Naive thymus-derived CD4-positive, alpha-beta T cell (primary cell): ENCODE measurements at regions of chrX and their contacts with region 1.

Region 1: GRCh38 chrX:153609917-153610428 is 11.0 kb upstream of the CCNQ start:
- DNase-seq: peak; percentile 58 to 78 (median 71)
- ATAC-seq: peak; percentile 96
- H3K4me3 ChIP-seq: peak overlapping the region; percentile 44
- H3K4me3 Mint-ChIP-seq: peak overlapping the region; percentile 77 to 87 (median 85)
- H3K27ac ChIP-seq: peak overlapping the region; percentile 60
- H3K27ac Mint-ChIP-seq: peak overlapping the region in 8 of 9 donors; percentile 41 to 85 (median 76)
- H3K4me1 ChIP-seq: peaks cover 0 to 5% of the 10 kb centered on the region in 2 donors
- H3K4me1 Mint-ChIP-seq: peaks cover under 1 to 13% (median 7%) of the 10 kb centered on the region in 7 donors
- H3K27me3 ChIP-seq: no peaks in the 10 kb centered on the region
- H3K27me3 Mint-ChIP-seq: peaks cover 0 to 16% (median 0%) of the 10 kb centered on the region in 5 donors

Region 2: GRCh38 chrX:153554519-153555167 is 55.3 kb before region 1 on chrX:
- CTCF ChIA-PET with region 1: interaction called, 3 read pairs
- POLR2A ChIA-PET with region 1: interaction called, 4 read pairs
- intact Hi-C with region 1: loop called in 1 of 2 experiments (anchors 2 kb)
- DNase-seq: peak; percentile 26 to 71 (median 57)
- ATAC-seq: peak; percentile 78
- H3K4me3 ChIP-seq: no peak overlapping the region
- H3K4me3 Mint-ChIP-seq: no peak overlapping the region
- H3K27ac ChIP-seq: no peak overlapping the region
- H3K27ac Mint-ChIP-seq: no peak overlapping the region
- H3K4me1 ChIP-seq: no peaks in the 10 kb centered on the region
- H3K4me1 Mint-ChIP-seq: peaks cover 0 to 3% (median 0%) of the 10 kb centered on the region in 7 donors
- H3K27me3 ChIP-seq: no peaks in the 10 kb centered on the region
- H3K27me3 Mint-ChIP-seq: no peaks in the 10 kb centered on the region

Region 3: GRCh38 chrX:153568451-153569011 is 41.4 kb before region 1 on chrX:
- CTCF ChIA-PET with region 1: no interaction called
- POLR2A ChIA-PET with region 1: no interaction called
- intact Hi-C with region 1: no loop called
- DNase-seq: no peak
- ATAC-seq: no peak
- H3K4me3 ChIP-seq: no peak overlapping the region
- H3K4me3 Mint-ChIP-seq: no peak overlapping the region
- H3K27ac ChIP-seq: no peak overlapping the region
- H3K27ac Mint-ChIP-seq: no peak overlapping the region
- H3K4me1 ChIP-seq: no peaks in the 10 kb centered on the region
- H3K4me1 Mint-ChIP-seq: peaks cover 0 to 10% (median 3%) of the 10 kb centered on the region in 7 donors
- H3K27me3 ChIP-seq: no peaks in the 10 kb centered on the region
- H3K27me3 Mint-ChIP-seq: peaks cover 0 to 2% (median 0%) of the 10 kb centered on the region in 5 donors

Region 4: DNA sequence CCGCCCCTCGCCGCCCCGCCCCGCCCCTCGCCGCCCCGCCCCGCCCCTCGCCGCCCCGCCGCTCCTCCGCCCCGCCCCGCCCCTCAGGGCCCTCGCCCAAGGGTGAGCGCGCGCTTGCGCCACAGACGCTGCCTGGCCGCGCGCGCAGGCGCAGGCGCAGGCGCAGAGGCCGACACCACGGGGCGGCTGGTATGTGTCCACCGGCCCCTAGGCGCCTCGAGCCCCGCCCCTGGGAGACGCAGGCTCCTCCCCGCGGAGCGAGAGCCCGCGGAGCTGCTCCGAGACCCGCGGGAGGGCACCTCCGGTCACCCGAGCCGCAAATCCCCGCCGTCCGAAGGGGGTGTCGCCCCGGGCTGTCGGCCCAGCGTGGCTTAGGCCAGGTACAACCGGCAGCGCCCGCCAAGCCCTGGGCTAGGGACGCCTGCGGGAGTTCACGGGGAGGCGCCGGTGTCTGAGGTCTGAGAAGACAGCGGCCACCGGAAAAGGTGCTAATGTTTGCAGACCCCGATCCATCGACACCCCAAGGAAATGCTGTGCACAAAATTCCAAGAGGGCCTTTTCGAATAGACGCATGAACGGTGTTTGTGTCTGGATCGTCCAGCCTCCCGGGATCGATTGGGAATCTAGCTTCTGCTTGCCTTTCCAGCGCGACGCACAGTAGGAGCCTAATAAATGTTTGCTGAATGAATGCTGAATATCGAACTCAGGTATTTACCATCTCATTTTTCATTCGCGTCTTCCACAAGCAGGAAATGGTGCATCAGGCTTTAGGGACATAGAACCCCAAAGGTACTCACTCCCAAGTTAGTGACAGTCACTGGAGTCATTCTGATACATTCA is 10.6 kb before region 1 on chrX:
- CTCF ChIA-PET with region 1: interaction called, 15 read pairs
- POLR2A ChIA-PET with region 1: interaction called, 10 read pairs
- intact Hi-C with region 1: loop called (anchors 1 kb)
- DNase-seq: peak; percentile 77 to 91 (median 82)
- ATAC-seq: peak; percentile 94
- H3K4me3 ChIP-seq: peak overlapping the region; percentile 69
- H3K4me3 Mint-ChIP-seq: peak overlapping the region; percentile 79 to 93 (median 90)
- H3K27ac ChIP-seq: peak overlapping the region; percentile 74
- H3K27ac Mint-ChIP-seq: peak overlapping the region in 7 of 9 donors; percentile 48 to 83 (median 64)
- H3K4me1 ChIP-seq: peaks cover 19 to 21% of the 10 kb centered on the region in 2 donors
- H3K4me1 Mint-ChIP-seq: peaks cover 23 to 60% (median 46%) of the 10 kb centered on the region in 7 donors
- H3K27me3 ChIP-seq: no peaks in the 10 kb centered on the region
- H3K27me3 Mint-ChIP-seq: no peaks in the 10 kb centered on the region

Region 5: GRCh38 chrX:153662266-153662665 is 52.3 kb after region 1 on chrX:
- CTCF ChIA-PET with region 1: interaction called, 6 read pairs
- POLR2A ChIA-PET with region 1: interaction called, 3 read pairs
- intact Hi-C with region 1: loop called in 1 of 2 experiments (anchors 1 kb)
- DNase-seq: peak in 8 of 9 donors; percentile 26 to 58 (median 52)
- ATAC-seq: no peak
- H3K4me3 ChIP-seq: no peak overlapping the region
- H3K4me3 Mint-ChIP-seq: peak overlapping the region in 9 of 10 donors; percentile 42 to 73 (median 55)
- H3K27ac ChIP-seq: no peak overlapping the region
- H3K27ac Mint-ChIP-seq: no peak overlapping the region
- H3K4me1 ChIP-seq: no peaks in the 10 kb centered on the region
- H3K4me1 Mint-ChIP-seq: peaks cover 0 to 6% (median 0%) of the 10 kb centered on the region in 7 donors
- H3K27me3 ChIP-seq: no peaks in the 10 kb centered on the region
- H3K27me3 Mint-ChIP-seq: peaks cover 0 to 46% (median 6%) of the 10 kb centered on the region in 5 donors